ENCODE measurements at regions of chr17 and their contacts with region 1.

Region 1: DNA sequence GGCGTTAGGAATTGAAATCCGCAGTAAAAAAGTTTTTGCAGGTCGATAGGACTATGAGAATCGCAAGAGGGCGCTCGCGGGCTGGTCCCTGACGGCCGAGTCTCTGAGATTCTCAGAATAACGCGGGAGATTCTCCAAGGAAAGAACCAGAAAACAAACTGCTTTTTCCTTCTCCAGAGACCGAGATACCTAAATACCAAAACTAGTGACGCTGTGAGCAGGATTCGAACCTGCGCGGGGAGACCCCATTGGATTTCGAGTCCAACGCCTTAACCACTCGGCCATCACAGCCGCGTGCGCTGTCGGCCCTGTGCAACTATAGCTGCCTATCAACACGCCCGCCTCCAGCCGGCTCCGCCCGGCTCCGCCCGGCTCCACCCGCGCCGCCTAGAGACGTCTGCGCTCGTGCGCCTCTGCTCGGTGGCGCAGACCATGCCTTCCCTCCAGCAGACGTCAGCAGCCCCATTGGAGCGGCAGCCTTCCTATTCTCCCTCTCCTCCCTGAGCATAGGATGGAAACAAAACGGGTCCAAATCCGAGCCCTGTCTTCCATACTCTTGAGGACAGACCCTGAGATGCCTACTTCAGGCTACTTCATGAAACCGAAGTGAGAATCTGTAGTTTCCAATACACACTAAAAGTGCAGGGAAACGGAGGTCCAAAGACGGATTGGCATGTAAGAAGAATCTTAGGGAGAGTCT is 13.4 kb downstream of the PER1 start:
- DNase-seq: peak; percentile 97
- H3K4me3 Mint-ChIP-seq: no peak overlapping the region
- H3K27ac Mint-ChIP-seq: no peak overlapping the region
- H3K4me1 Mint-ChIP-seq: peaks cover 2% of the 10 kb centered on the region
- H3K27me3 Mint-ChIP-seq: peaks cover 5% of the 10 kb centered on the region

Region 2: GRCh38 chr17:7922845-7923628 is 215.8 kb before region 1 on chr17:
- intact Hi-C with region 1: no loop called
- DNase-seq: peak; percentile 77
- H3K4me3 Mint-ChIP-seq: peak overlapping the region; percentile 60
- H3K27ac Mint-ChIP-seq: peak overlapping the region; percentile 64
- H3K4me1 Mint-ChIP-seq: peaks cover 15% of the 10 kb centered on the region
- H3K27me3 Mint-ChIP-seq: no peaks in the 10 kb centered on the region

Region 3: GRCh38 chr17:8057691-8058114 is 81.1 kb before region 1 on chr17:
- intact Hi-C with region 1: no loop called
- DNase-seq: peak; percentile 30
- H3K4me3 Mint-ChIP-seq: no peak overlapping the region
- H3K27ac Mint-ChIP-seq: no peak overlapping the region
- H3K4me1 Mint-ChIP-seq: peaks cover 26% of the 10 kb centered on the region
- H3K27me3 Mint-ChIP-seq: peaks cover 47% of the 10 kb centered on the region

Region 4: GRCh38 chr17:8125157-8125946 is 13.5 kb before region 1 on chr17:
- intact Hi-C with region 1: loop called (anchors 1 kb)
- DNase-seq: peak; percentile 78
- H3K4me3 Mint-ChIP-seq: peak overlapping the region; percentile 87
- H3K27ac Mint-ChIP-seq: peak overlapping the region; percentile 78
- H3K4me1 Mint-ChIP-seq: peaks cover 47% of the 10 kb centered on the region
- H3K27me3 Mint-ChIP-seq: peaks cover 42% of the 10 kb centered on the region

Region 5: GRCh38 chr17:8151123-8151640 is 12.4 kb after region 1 on chr17:
- intact Hi-C with region 1: loop called (anchors 1 kb)
- DNase-seq: peak; percentile 89
- H3K4me3 Mint-ChIP-seq: peak overlapping the region; percentile 94
- H3K27ac Mint-ChIP-seq: peak overlapping the region; percentile 86
- H3K4me1 Mint-ChIP-seq: peaks cover 25% of the 10 kb centered on the region
- H3K27me3 Mint-ChIP-seq: no peaks in the 10 kb centered on the region

Region 6: GRCh38 chr17:8156246-8156992 is 17.6 kb after region 1 on chr17:
- intact Hi-C with region 1: loop called (anchors 1 kb)
- DNase-seq: peak; percentile 100
- H3K4me3 Mint-ChIP-seq: no peak overlapping the region
- H3K27ac Mint-ChIP-seq: no peak overlapping the region
- H3K4me1 Mint-ChIP-seq: peaks cover 49% of the 10 kb centered on the region
- H3K27me3 Mint-ChIP-seq: no peaks in the 10 kb centered on the region

Region 7: DNA sequence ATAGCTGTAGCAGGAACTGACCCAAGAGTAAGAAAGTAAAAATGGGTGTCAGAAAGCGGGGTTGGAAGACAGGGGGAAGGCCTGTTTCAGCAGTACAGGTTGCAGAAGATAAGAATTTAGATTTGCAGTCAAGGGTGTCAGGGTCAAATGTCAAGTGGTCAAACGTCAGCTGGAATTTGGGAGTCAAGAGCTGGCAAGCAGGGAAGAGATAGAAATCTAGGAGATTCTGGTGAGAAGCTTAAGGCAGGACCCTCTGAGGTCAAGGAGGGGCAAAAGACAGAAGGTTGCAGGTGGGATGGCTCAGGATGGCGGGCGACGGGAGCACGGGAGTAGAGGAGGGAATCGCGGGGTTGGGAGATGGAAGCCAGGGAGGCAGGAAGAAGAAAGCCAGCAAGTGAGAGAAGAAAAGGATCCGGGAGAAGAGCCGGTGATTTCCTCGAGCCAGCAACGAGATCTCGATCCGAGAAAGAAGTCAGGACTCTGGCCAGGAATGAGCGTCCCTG is 156.0 kb after region 1 on chr17:
- intact Hi-C with region 1: loop called (anchors 1 kb)
- DNase-seq: no peak
- H3K4me3 Mint-ChIP-seq: peak overlapping the region; percentile 90
- H3K27ac Mint-ChIP-seq: peak overlapping the region; percentile 91
- H3K4me1 Mint-ChIP-seq: peaks cover 33% of the 10 kb centered on the region
- H3K27me3 Mint-ChIP-seq: no peaks in the 10 kb centered on the region

Measured in activated T-helper 2 cell treated with anti-CD3 and anti-CD28 coated beads, Interferon-gamma antibody, Interleukin-2, Interleukin-4, amounts not matched to agents 10 μg/mL and 5 μg/mL and 100 μg/mL, durations not matched to agents 14 hours and 24 hours and 36 hours (primary cell).